ENCODE measurements at regions of chr18 and their contacts with region 1.

Region 1: DNA sequence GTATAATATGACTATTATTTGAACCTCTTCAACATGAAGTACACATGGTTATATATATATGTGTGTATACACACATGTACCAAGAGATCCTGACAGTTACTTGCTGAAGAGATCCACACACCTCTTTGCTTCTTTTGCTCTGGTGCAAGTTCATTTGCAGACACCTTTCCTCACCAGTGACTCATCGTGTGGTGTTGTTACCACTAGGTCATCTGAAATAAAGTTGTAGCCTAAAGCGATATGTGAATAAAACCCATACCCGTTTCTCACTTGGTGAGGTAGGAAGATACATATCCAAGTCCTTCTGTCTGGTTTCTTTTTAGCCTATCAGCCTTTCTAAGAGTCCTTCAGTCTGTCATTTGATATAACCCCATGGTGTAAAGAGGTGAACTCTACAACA is 379.5 kb upstream of the RAB12 start:
- DNase-seq: no peak

Region 2: GRCh38 chr18:8257851-8258434 is 28.2 kb after region 1 on chr18:
- intact Hi-C with region 1: loop called in 1 of 2 experiments (anchors 1 kb)
- DNase-seq: no peak

Region 3: DNA sequence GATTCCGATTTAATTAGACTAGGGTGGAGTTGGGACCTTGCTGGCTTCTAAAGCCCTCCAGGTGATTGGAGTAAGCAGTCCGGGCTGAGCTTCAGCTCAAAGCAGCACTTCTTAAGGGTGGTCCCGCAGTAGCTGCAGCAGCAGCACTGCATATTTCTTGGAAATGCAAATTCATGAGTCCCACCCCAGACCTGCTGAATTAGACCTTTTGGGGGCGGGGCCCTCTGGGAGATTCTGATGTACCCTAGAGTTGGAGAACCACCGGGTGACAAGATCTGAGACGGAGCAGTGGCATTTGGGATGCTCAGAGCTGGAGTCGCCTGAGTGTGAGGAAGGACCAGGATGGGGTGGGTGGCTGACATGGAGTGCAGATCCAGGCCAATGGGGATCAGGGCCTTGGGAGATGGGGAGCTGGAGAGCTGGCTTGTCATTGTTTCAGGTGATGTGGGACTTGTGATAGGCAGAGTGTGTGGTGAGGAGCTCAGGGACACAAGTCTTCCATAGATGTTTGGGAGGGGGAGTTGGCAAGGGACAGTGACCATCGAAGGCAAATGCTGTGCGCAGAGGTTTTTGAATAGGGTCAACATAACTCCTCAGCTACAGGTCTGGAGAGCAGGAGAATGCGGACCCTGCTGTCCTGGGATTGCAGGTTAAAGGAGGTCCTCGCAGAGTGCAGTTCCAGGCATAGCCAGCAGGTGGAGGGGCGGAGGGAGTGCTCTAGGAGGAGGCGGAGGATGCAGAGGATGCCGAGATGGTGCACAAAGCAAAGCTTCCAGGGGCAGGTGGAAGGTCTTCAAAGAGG is 248.6 kb after region 1 on chr18:
- intact Hi-C with region 1: loop called in 1 of 2 experiments (anchors 10 kb)
- DNase-seq: peak; percentile 85

Measured in posterior vena cava (tissue), 2 donors.